H1 (cell line): ENCODE measurements at regions of chr11 and their contacts with region 1.

Region 1: GRCh38 chr11:121119440-121119839 is 18.4 kb downstream of the TECTA start:
- DNase-seq: no peak
- H3K4me3 ChIP-seq: no peak overlapping the region
- H3K27ac ChIP-seq: no peak overlapping the region
- H3K4me1 ChIP-seq: no peaks in the 10 kb centered on the region
- H3K27me3 ChIP-seq: no peaks in the 10 kb centered on the region
- CTCF ChIP-seq: peak in 1 of 3 experiments; percentile 15; a peak in 1 of 4 replicates
- EP300 ChIP-seq: no peak
- POLR2A ChIP-seq: no peak
- RAD21 ChIP-seq: peak in 1 of 2 experiments; percentile 18; a peak in 1 of 4 replicates

Region 2: GRCh38 chr11:120977266-120978137 is 141.9 kb before region 1 on chr11:
- CTCF ChIA-PET with region 1: no interaction called
- POLR2A ChIA-PET with region 1: no interaction called
- DNase-seq: no peak
- H3K4me3 ChIP-seq: no peak overlapping the region
- H3K27ac ChIP-seq: no peak overlapping the region
- H3K4me1 ChIP-seq: no peaks in the 10 kb centered on the region
- H3K27me3 ChIP-seq: no peaks in the 10 kb centered on the region
- CTCF ChIP-seq: no peak
- EP300 ChIP-seq: no peak
- POLR2A ChIP-seq: no peak
- RAD21 ChIP-seq: no peak

Region 3: DNA sequence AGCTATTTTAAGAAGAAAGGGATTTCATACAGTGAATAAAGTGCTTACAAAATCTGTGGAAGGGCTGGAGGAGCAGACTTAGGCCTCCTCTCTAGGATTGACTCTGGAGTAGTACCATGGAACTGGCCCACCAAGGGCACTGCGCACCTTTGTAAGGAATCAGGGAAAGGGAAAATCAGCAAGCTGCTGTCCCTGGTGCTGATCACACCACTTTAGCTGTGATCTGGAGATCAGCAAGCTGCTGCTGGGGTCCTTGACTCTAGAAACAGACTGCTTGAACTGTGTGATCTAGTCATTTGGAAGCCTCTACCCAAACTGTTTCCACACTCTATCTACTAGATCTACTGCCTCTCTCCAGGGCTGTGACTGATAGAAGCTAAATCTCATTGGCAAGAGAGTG is 36.8 kb before region 1 on chr11:
- CTCF ChIA-PET with region 1: no interaction called
- POLR2A ChIA-PET with region 1: no interaction called
- DNase-seq: peak; percentile 19 to 75
- H3K4me3 ChIP-seq: no peak overlapping the region
- H3K27ac ChIP-seq: no peak overlapping the region
- H3K4me1 ChIP-seq: no peaks in the 10 kb centered on the region
- H3K27me3 ChIP-seq: no peaks in the 10 kb centered on the region; a peak in 1 of 7 replicates
- CTCF ChIP-seq: no peak
- EP300 ChIP-seq: no peak
- POLR2A ChIP-seq: no peak
- RAD21 ChIP-seq: peak; percentile 14 to 20; a peak in 2 of 4 replicates

Region 4: GRCh38 chr11:121104312-121104762 is 15.1 kb before region 1 on chr11:
- CTCF ChIA-PET with region 1: interaction called, 36 read pairs
- POLR2A ChIA-PET with region 1: interaction called, 3 read pairs
- DNase-seq: peak in 1 of 2 experiments; percentile 67
- H3K4me3 ChIP-seq: no peak overlapping the region
- H3K27ac ChIP-seq: no peak overlapping the region
- H3K4me1 ChIP-seq: peaks cover 0 to 3% (median 1%) of the 10 kb centered on the region in 4 experiments; a peak in 3 of 7 replicates
- H3K27me3 ChIP-seq: no peaks in the 10 kb centered on the region
- CTCF ChIP-seq: peak; percentile 76 to 94 (median 81)
- EP300 ChIP-seq: no peak
- POLR2A ChIP-seq: no peak
- RAD21 ChIP-seq: peak; percentile 27 to 59